ENCODE measurements at regions of chr12 and their contacts with region 1.

Region 1: DNA sequence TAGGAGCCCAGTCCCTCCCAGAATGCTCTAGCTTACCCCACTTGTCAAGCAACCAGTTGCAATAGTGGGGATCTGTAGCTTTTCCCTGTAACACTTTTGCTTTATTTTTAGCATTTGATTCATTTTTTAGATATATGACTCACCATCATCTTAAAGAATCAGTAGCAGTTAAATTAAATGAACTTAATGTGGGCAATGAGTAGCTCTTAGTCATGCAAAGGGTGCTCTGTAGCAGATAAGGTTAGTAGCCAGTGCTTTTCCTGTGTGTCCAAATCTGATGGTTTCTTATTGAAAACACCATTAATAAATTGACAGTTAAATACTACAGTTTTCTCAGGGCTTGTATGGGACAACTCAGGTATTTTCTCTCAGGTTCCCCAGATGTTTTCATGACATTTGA is 311.8 kb downstream of the RERGL start:
- DNase-seq: no peak
- H3K4me3 ChIP-seq: no peak overlapping the region
- H3K4me3 Mint-ChIP-seq: no peak overlapping the region
- H3K27ac ChIP-seq: no peak overlapping the region
- H3K27ac Mint-ChIP-seq: no peak overlapping the region
- H3K4me1 ChIP-seq: no peaks in the 10 kb centered on the region
- H3K4me1 Mint-ChIP-seq: no peaks in the 10 kb centered on the region
- H3K27me3 ChIP-seq: no peaks in the 10 kb centered on the region
- H3K27me3 Mint-ChIP-seq: no peaks in the 10 kb centered on the region
- CTCF ChIP-seq: no peak

Region 2: DNA sequence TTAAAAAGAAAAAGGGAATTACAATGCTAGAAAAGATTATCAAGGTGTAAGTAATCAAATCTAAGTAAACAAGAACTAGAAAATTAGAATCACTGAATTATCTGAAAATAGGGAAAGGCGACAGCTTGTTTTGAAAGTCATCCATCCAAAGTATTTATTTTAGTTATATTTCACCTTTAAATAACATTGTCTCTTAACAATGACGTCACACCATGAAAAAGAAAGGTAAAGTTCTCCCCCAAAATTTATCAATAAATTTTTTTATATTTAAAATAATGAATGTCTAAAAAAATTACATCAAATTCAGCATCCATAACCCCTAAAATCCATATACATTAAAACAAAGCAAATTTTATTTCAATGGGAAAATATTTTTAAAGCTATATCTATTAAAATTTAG is 88.6 kb after region 1 on chr12:
- intact Hi-C with region 1: loop called (anchors 2 to 5 kb)
- DNase-seq: no peak
- H3K4me3 ChIP-seq: no peak overlapping the region
- H3K4me3 Mint-ChIP-seq: no peak overlapping the region
- H3K27ac ChIP-seq: no peak overlapping the region
- H3K27ac Mint-ChIP-seq: no peak overlapping the region
- H3K4me1 ChIP-seq: no peaks in the 10 kb centered on the region
- H3K4me1 Mint-ChIP-seq: no peaks in the 10 kb centered on the region
- H3K27me3 ChIP-seq: no peaks in the 10 kb centered on the region
- H3K27me3 Mint-ChIP-seq: no peaks in the 10 kb centered on the region
- CTCF ChIP-seq: no peak

Region 3: DNA sequence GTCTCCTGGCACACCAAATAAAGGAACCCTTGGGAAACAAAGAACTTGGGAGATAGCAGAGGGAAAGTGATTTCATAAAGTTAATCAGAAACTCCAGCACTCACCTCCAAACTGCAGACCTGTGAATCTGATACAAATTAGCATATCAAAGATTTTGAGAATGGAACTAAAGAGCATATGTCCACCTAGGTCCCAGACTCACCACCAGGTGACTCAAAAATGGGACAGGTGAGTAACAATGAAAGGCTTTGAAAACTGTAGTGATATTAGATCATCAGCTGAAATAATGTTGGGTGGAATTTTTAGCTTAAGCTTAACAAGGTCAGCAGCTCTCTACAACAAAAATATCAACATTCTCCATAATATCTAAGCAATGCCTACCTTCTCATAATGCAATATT is 97.0 kb after region 1 on chr12:
- intact Hi-C with region 1: loop called in 1 of 2 experiments (anchors 5 kb)
- DNase-seq: no peak
- H3K4me3 ChIP-seq: no peak overlapping the region
- H3K4me3 Mint-ChIP-seq: no peak overlapping the region
- H3K27ac ChIP-seq: no peak overlapping the region
- H3K27ac Mint-ChIP-seq: no peak overlapping the region
- H3K4me1 ChIP-seq: no peaks in the 10 kb centered on the region
- H3K4me1 Mint-ChIP-seq: no peaks in the 10 kb centered on the region
- H3K27me3 ChIP-seq: no peaks in the 10 kb centered on the region
- H3K27me3 Mint-ChIP-seq: peaks cover 0 to 2% (median 0%) of the 10 kb centered on the region in 3 donors
- CTCF ChIP-seq: no peak

Region 4: GRCh38 chr12:18578191-18578590 is 799.9 kb after region 1 on chr12:
- intact Hi-C with region 1: no loop called
- DNase-seq: no peak
- H3K4me3 ChIP-seq: no peak overlapping the region
- H3K4me3 Mint-ChIP-seq: no peak overlapping the region
- H3K27ac ChIP-seq: no peak overlapping the region
- H3K27ac Mint-ChIP-seq: no peak overlapping the region
- H3K4me1 ChIP-seq: no peaks in the 10 kb centered on the region
- H3K4me1 Mint-ChIP-seq: no peaks in the 10 kb centered on the region
- H3K27me3 ChIP-seq: no peaks in the 10 kb centered on the region
- H3K27me3 Mint-ChIP-seq: no peaks in the 10 kb centered on the region
- CTCF ChIP-seq: no peak

Measured in CD14-positive monocyte (primary cell).